ENCODE measurements at regions of chr3 and their contacts with region 1.

Region 1: DNA sequence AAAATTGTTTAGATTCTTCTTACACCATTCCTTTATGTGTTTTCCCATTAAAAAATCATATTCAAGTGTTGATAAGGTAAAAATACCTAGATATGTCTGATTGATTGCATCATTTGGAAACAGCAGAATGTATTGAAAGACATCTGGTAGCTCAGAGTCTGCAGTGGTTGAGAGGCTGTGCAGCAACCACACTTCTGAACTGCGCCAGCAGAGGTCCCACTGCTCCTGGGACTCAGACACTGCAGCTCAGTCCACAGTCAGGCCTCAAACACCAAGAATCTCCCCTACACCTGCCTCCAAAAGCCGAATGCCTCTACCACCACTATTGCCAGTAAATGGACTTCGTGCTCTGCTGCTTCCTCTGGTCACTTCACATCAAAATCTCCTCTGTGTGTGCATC is 176.9 kb upstream of the LMCD1 start:
- DNase-seq: peak; percentile 22 to 80 (median 49)
- ATAC-seq: peak; percentile 81
- H3K4me3 ChIP-seq: no peak overlapping the region
- H3K4me3 Mint-ChIP-seq: no peak overlapping the region
- H3K27ac ChIP-seq: no peak overlapping the region
- H3K27ac Mint-ChIP-seq: no peak overlapping the region
- H3K4me1 ChIP-seq: peaks cover 17% of the 10 kb centered on the region
- H3K4me1 Mint-ChIP-seq: peaks cover 30% of the 10 kb centered on the region
- H3K27me3 ChIP-seq: no peaks in the 10 kb centered on the region
- H3K27me3 Mint-ChIP-seq: no peaks in the 10 kb centered on the region
- CTCF ChIP-seq: peak; percentile 43

Region 2: GRCh38 chr3:8366214-8366810 is 41.6 kb after region 1 on chr3:
- CTCF ChIA-PET with region 1: no interaction called
- POLR2A ChIA-PET with region 1: no interaction called
- intact Hi-C with region 1: loop called in 1 of 2 experiments (anchors 5 kb)
- DNase-seq: no peak
- ATAC-seq: no peak
- H3K4me3 ChIP-seq: no peak overlapping the region
- H3K4me3 Mint-ChIP-seq: no peak overlapping the region
- H3K27ac ChIP-seq: no peak overlapping the region
- H3K27ac Mint-ChIP-seq: no peak overlapping the region
- H3K4me1 ChIP-seq: no peaks in the 10 kb centered on the region
- H3K4me1 Mint-ChIP-seq: no peaks in the 10 kb centered on the region
- H3K27me3 ChIP-seq: no peaks in the 10 kb centered on the region
- H3K27me3 Mint-ChIP-seq: no peaks in the 10 kb centered on the region
- CTCF ChIP-seq: no peak

Region 3: GRCh38 chr3:8385848-8386620 is 61.3 kb after region 1 on chr3:
- CTCF ChIA-PET with region 1: no interaction called
- POLR2A ChIA-PET with region 1: interaction called, 3 read pairs
- intact Hi-C with region 1: loop called in 1 of 2 experiments (anchors 2 kb)
- DNase-seq: no peak
- ATAC-seq: no peak
- H3K4me3 ChIP-seq: no peak overlapping the region
- H3K4me3 Mint-ChIP-seq: no peak overlapping the region
- H3K27ac ChIP-seq: no peak overlapping the region
- H3K27ac Mint-ChIP-seq: no peak overlapping the region
- H3K4me1 ChIP-seq: no peaks in the 10 kb centered on the region
- H3K4me1 Mint-ChIP-seq: no peaks in the 10 kb centered on the region
- H3K27me3 ChIP-seq: no peaks in the 10 kb centered on the region
- H3K27me3 Mint-ChIP-seq: no peaks in the 10 kb centered on the region
- CTCF ChIP-seq: no peak

Region 4: GRCh38 chr3:8622873-8623691 is 298.3 kb after region 1 on chr3:
- CTCF ChIA-PET with region 1: no interaction called
- POLR2A ChIA-PET with region 1: no interaction called
- intact Hi-C with region 1: loop called in 1 of 2 experiments (anchors 10 kb)
- DNase-seq: peak in 10 of 14 experiments; percentile 10 to 54 (median 26)
- ATAC-seq: no peak
- H3K4me3 ChIP-seq: peak overlapping the region; percentile 35
- H3K4me3 Mint-ChIP-seq: no peak overlapping the region
- H3K27ac ChIP-seq: no peak overlapping the region
- H3K27ac Mint-ChIP-seq: no peak overlapping the region
- H3K4me1 ChIP-seq: peaks cover 3% of the 10 kb centered on the region
- H3K4me1 Mint-ChIP-seq: peaks cover 6% of the 10 kb centered on the region
- H3K27me3 ChIP-seq: no peaks in the 10 kb centered on the region
- H3K27me3 Mint-ChIP-seq: peaks cover 17% of the 10 kb centered on the region
- CTCF ChIP-seq: peak; percentile 56

Measured in CD4-positive, alpha-beta T cell (primary cell).